K562 (cell line): ENCODE measurements at regions of chr15 and their contacts with region 1.

Region 1: DNA sequence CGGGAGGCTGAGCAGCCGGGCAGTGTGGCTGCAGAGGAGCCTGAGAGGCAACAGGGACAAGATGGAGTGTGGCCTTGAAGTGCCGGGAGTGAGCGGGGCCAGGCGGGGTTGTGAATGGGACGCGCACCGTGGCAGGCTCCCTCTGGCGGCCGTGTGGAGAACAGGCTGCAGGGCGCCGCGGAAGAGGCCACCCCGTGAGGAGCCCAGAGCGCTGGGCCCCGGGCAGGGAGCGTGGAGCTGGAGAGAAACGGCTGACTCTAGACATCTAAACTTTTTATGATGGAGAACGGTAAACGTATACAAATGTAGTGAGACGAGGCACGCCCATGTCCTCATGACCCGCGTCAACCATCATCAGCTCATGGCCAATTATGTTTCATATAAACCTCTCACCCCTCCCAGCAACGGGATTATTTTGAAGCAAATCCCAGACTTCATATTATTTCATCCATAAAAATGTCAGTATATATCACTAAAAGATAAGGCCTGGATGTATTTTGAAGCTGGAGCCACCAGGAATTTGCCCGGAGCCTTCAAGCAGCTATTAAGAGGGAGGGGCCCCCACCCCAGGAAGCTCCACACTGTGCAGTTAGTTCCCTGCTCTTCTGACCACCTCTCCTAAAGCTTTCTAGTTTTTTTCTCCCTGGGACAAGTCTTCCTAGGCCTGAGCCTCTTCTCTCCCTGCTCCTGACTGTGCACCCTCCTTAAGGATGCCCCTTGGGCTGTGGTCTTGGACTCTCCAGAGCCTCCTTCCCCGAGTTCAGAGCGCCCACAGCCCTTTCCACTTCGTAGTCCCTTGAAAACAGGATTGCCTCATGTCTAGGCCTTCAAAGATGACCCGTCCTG is 149.4 kb downstream of the SMAD6 start:
- DNase-seq: peak; percentile 91 to 93 (median 92)
- ATAC-seq: peak; percentile 96
- H3K4me3 ChIP-seq: no peak overlapping the region
- H3K27ac ChIP-seq: no peak overlapping the region
- H3K4me1 ChIP-seq: peaks cover 24 to 40% of the 10 kb centered on the region in 2 experiments; a peak in 4 of 5 replicates
- H3K27me3 ChIP-seq: no peaks in the 10 kb centered on the region
- CTCF ChIP-seq: peak; percentile 91 to 97 (median 92)
- EP300 ChIP-seq: no peak
- POLR2A ChIP-seq: no peak
- RAD21 ChIP-seq: peak; percentile 74 to 90

Region 2: DNA sequence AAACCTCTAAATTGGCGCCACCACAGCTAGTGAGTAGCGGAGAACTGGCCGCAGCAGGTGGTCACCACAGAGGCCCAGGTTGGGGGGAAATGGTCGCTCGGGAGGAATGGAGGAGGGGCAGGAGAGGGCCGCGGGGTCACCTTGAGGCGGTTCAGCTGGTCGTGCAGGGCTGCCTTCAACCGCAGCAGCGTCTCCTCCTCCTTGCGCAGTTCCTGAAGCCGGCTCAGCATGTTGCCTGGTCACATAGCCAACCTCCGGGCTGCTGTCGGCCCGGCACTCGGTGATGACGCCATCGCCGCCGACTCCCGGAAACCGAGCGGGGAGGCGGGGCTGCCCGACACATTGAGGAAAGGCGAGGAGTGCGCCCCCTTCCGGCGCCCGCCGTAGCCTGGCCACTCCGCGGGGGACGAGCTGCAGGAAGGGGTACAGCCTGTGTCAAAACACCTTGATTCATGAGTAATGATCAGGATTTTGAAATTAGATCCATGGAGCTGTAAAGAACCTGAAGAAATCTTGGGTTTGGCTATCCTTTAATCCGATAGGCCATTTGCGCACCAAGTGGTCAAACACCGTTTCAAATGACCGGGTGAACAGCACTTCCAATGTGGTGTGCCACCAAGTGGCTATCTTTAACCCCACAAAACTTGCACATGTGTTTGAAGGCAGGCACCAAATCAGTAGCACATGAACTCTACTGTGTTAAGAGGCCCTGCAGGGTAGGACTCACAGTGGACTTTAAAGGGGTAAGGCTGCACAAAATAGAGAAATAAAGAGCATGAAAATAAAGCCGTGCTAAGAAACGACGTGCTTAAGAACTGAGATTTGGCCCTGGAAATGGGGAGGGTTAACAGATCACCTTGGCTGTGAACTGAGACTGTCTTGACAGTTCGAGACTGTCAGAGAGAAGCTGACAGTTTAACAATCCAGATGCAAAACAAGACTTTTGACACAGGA is 353.7 kb before region 1 on chr15 and contains the start of gene SNAPC5:
- CTCF ChIA-PET with region 1: no interaction called
- POLR2A ChIA-PET with region 1: interaction called, 3 read pairs
- in situ Hi-C with region 1: no loop called
- intact Hi-C with region 1: loop called (anchors 10 kb)
- DNase-seq: peak; percentile 84 to 97 (median 88)
- ATAC-seq: peak; percentile 92
- H3K4me3 ChIP-seq: peak within 1 kb of the TSS; percentile 83
- H3K27ac ChIP-seq: peak within 1 kb of the TSS; percentile 93
- H3K4me1 ChIP-seq: peaks cover 5 to 13% of the 10 kb centered on the region in 2 experiments
- H3K27me3 ChIP-seq: no peaks in the 10 kb centered on the region
- CTCF ChIP-seq: peak; percentile 83 to 99 (median 94)
- EP300 ChIP-seq: peak; percentile 51; the same call in 1 of the 2 replicates
- POLR2A ChIP-seq: peak; percentile 87
- RAD21 ChIP-seq: peak; percentile 53 to 70
- polyA plus RNA-seq, gene SNAPC5: 155 TPM

Region 3: GRCh38 chr15:66595931-66596545 is 255.4 kb before region 1 on chr15:
- CTCF ChIA-PET with region 1: no interaction called
- POLR2A ChIA-PET with region 1: interaction called, 4 read pairs
- in situ Hi-C with region 1: loop called (anchors 10 kb)
- intact Hi-C with region 1: no loop called
- DNase-seq: no peak
- ATAC-seq: no peak
- H3K4me3 ChIP-seq: no peak overlapping the region
- H3K27ac ChIP-seq: no peak overlapping the region
- H3K4me1 ChIP-seq: peaks cover 16 to 24% of the 10 kb centered on the region in 2 experiments; a peak in 4 of 5 replicates
- H3K27me3 ChIP-seq: no peaks in the 10 kb centered on the region
- CTCF ChIP-seq: no peak
- EP300 ChIP-seq: no peak
- POLR2A ChIP-seq: no peak
- RAD21 ChIP-seq: no peak

Region 4: DNA sequence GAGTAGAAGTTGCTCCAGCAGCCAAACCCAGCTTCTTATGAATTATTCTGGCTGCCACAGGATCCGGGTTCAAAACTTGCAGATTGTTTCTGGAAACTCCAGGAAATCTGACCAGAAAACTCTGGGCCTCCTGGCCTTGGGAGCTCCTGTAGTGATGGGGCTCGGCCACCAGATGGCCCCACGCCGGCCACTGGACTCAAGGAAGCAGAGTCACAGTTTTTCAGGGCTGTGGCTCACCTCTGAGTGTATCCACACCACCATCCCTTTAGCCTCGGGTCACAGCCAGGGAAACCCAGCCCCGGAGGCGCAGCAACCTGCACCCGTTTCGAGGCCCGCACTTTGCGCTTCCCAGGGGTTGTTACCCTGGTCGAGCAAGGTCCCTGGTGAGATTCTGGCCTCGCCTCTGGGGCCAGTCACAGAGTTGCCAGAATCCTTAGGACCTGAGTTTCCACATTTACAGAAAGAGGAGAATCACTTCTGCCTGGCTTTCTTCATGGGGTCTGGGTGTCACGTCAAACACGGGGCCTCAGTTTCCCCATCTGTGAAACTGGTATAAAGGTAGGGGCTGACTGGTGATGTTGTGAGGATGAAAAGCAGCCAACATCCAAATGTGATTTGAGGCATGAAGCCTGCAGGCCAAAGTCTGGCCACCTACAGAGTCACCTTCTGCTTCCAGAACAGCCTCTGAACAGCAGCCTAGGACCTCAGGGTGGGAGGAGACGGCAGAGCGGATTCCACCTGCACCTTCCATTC is 232.1 kb before region 1 on chr15:
- CTCF ChIA-PET with region 1: no interaction called
- POLR2A ChIA-PET with region 1: interaction called, 3 read pairs
- in situ Hi-C with region 1: no loop called
- intact Hi-C with region 1: loop called (anchors 5 kb)
- DNase-seq: peak; percentile 65 to 86 (median 72)
- ATAC-seq: peak; percentile 76
- H3K4me3 ChIP-seq: no peak overlapping the region
- H3K27ac ChIP-seq: peak overlapping the region; percentile 27; the same call in 2 of the 3 replicates
- H3K4me1 ChIP-seq: peaks cover 55 to 62% of the 10 kb centered on the region in 2 experiments
- H3K27me3 ChIP-seq: no peaks in the 10 kb centered on the region
- CTCF ChIP-seq: peak; percentile 88 to 93 (median 89)
- EP300 ChIP-seq: no peak
- POLR2A ChIP-seq: no peak
- RAD21 ChIP-seq: peak; percentile 72 to 85

Region 5: DNA sequence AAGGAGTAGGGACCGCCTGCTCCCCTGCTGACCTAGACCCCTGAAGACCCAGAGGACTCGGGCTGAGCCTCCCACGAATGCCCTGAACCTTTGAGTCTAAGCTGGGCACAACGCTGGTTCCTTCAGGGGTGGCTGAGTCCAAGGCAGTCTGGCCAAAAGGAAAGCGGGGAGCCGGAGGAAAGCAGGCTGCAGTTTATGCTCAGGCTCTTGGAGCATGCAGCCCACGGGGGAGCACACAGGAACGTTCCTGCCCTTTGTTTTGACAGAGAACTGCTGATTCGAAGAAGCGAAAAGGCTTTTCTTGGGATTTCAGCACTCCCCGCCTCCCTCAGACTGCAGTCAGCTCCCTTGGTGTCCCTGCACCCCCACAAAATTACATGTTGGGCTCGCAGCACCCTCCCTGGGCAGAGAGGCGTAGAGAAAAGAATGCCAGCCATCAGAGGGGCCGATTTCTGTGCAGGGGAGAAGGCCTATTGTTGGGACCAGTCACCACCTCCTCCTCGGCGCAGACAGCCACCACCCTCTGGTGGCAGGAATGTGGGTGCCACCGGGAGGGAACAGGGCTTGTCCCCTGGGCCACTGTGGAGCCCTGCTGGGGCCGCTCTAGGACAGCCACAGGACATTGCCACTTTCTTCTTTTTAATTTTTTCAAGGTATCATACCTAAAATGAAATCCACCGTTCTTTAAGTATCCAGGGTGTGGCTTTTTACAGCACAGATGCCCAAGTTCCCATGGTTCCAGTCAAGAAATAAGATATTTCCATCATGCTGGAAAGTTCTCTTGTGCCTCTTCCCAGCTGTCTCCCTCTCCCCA is 77.2 kb before region 1 on chr15:
- CTCF ChIA-PET with region 1: interaction called, 37 read pairs
- POLR2A ChIA-PET with region 1: interaction called, 3 read pairs
- in situ Hi-C with region 1: no loop called
- intact Hi-C with region 1: loop called (anchors 5 kb)
- DNase-seq: peak; percentile 87 to 93 (median 92)
- ATAC-seq: peak; percentile 99
- H3K4me3 ChIP-seq: no peak overlapping the region
- H3K27ac ChIP-seq: no peak overlapping the region
- H3K4me1 ChIP-seq: peaks cover 16 to 18% of the 10 kb centered on the region in 2 experiments
- H3K27me3 ChIP-seq: no peaks in the 10 kb centered on the region
- CTCF ChIP-seq: peak; percentile 98 to 99 (median 99)
- EP300 ChIP-seq: no peak; the same call in 1 of the 2 replicates
- POLR2A ChIP-seq: no peak
- RAD21 ChIP-seq: peak; percentile 84 to 94

Region 6: DNA sequence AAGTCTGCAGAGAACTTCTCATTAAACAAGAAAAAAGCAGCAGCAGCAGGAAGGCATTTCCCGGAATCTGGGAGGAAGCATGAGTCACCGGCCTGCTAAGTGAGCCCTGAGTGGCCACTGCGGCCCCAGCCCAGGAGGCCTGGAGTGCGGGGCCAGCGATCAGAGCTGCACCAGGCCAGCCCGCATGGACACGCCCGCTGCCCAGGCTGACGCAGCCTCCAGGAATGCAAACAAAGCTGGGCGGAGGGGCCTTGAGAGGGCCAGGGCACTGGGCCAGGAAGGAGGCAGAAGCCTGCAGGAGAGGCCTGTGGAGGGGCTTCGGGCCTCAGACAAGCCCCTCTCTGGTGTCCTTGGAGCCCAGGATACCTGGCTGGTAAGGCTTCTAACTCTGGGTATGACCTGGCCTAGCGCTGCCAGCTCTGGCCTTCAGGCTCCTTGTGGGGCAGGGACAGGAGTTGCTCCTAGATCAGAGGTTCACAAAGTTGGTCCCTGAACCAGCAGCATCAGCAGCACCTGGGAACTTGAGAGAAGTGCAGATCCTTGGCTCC is 48.2 kb before region 1 on chr15:
- CTCF ChIA-PET with region 1: no interaction called
- POLR2A ChIA-PET with region 1: no interaction called
- in situ Hi-C with region 1: no loop called
- intact Hi-C with region 1: loop called (anchors 5 kb)
- DNase-seq: peak; percentile 93 to 95 (median 94)
- ATAC-seq: peak; percentile 100
- H3K4me3 ChIP-seq: no peak overlapping the region; the same call in 1 of the 2 replicates
- H3K27ac ChIP-seq: peak overlapping the region; percentile 79
- H3K4me1 ChIP-seq: peaks cover 27 to 47% of the 10 kb centered on the region in 2 experiments
- H3K27me3 ChIP-seq: no peaks in the 10 kb centered on the region
- CTCF ChIP-seq: no peak
- EP300 ChIP-seq: peak; percentile 73
- POLR2A ChIP-seq: no peak; the same call in 1 of the 2 replicates
- RAD21 ChIP-seq: peak in 1 of 2 experiments; percentile 22; a peak in 1 of 4 replicates

Region 7: GRCh38 chr15:67941648-67942310 is 1090.3 kb after region 1 on chr15:
- CTCF ChIA-PET with region 1: no interaction called
- POLR2A ChIA-PET with region 1: no interaction called
- in situ Hi-C with region 1: no loop called
- intact Hi-C with region 1: no loop called
- DNase-seq: peak in 1 of 4 experiments; percentile 17
- ATAC-seq: no peak
- H3K4me3 ChIP-seq: no peak overlapping the region
- H3K27ac ChIP-seq: no peak overlapping the region
- H3K4me1 ChIP-seq: peaks cover 10 to 12% of the 10 kb centered on the region in 2 experiments
- H3K27me3 ChIP-seq: no peaks in the 10 kb centered on the region; a peak in 1 of 5 replicates
- CTCF ChIP-seq: no peak
- EP300 ChIP-seq: no peak
- POLR2A ChIP-seq: no peak
- RAD21 ChIP-seq: no peak